ENCODE measurements at regions of chr4 and their contacts with region 1.

Region 1: DNA sequence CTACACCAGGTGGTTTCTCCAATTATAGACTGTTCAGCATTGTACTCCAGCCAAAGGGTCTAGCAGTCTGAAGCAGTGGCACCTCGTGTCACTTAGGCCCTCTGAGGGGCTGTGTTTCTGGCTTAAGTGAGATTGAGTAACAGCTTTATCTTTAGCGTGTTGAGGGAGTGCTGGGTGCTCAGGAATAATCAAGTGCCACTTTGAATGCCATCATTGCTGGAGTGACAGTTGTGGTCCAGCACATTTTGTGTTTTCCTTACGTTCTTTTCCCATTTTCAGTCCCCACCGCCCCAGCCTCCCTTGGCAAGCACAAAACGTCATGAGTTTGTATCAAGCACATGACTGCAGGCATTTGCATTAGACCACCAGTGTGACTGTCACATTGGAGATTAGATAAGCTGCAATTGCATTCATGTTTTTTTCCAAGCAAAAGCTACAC is 58.7 kb downstream of the FNIP2 start:
- DNase-seq: no peak

Region 2: DNA sequence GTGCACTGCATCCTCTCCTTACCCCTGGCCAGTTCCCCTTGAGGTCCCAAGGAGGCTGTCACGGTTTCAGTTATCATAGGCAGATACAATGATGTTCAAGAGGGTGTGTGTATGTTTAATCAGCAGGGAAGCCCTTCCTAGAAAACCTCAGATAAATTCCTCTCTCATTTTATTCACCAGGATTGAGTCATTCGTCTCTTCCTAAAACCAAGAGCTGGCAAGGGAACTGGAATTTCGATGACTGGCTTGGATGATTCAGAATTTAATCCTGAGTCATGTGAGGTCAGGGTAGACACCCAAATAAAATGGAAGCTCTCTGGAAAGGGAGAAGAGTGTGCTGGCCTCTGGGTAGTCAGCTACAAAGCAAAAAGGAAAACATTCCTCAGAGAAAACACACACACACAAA is 169.1 kb after region 1 on chr4:
- CTCF ChIA-PET with region 1: interaction called, 12 read pairs
- POLR2A ChIA-PET with region 1: no interaction called
- DNase-seq: no peak